Ascending aorta (tissue), 2 donors: ENCODE measurements at regions of chr6 and their contacts with region 1.

Region 1: GRCh38 chr6:157323255-157323965 is at the start of gene TMEM242:
- DNase-seq: peak; percentile 67 to 95
- H3K4me3 ChIP-seq: peak within 1 kb of the TSS; percentile 75 to 97
- H3K27ac ChIP-seq: peak within 1 kb of the TSS; percentile 96 to 97
- H3K4me1 ChIP-seq: peaks cover 7 to 21% of the 10 kb centered on the region in 2 donors
- H3K27me3 ChIP-seq: no peaks in the 10 kb centered on the region
- CTCF ChIP-seq: peak; percentile 21 to 43 (median 23)
- total RNA-seq, gene TMEM242: 2.3 TPM

Region 2: DNA sequence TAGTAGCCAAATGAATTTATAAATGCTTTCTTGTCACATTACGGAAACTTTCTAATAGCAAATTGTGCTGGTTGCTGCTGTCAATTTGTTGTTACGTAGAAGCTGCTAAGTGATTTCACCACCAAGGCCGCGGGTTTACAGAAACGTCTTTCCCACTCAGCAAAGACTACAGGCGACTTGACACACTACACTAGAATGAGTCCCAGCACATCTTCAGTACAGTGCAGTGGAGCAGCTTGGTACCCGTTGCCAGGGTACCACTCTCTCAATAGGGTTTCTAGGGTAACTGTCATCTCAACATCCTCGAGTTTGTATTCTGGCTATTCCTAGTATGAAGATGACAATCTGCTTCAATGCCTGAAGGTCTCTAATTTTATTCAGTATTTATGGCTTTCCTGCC is 34.9 kb after region 1 on chr6:
- intact Hi-C with region 1: loop called (anchors 1 kb)
- DNase-seq: no peak
- H3K4me3 ChIP-seq: no peak overlapping the region
- H3K27ac ChIP-seq: no peak overlapping the region
- H3K4me1 ChIP-seq: peaks cover 0 to 14% of the 10 kb centered on the region in 2 donors
- H3K27me3 ChIP-seq: no peaks in the 10 kb centered on the region
- CTCF ChIP-seq: no peak

Region 3: DNA sequence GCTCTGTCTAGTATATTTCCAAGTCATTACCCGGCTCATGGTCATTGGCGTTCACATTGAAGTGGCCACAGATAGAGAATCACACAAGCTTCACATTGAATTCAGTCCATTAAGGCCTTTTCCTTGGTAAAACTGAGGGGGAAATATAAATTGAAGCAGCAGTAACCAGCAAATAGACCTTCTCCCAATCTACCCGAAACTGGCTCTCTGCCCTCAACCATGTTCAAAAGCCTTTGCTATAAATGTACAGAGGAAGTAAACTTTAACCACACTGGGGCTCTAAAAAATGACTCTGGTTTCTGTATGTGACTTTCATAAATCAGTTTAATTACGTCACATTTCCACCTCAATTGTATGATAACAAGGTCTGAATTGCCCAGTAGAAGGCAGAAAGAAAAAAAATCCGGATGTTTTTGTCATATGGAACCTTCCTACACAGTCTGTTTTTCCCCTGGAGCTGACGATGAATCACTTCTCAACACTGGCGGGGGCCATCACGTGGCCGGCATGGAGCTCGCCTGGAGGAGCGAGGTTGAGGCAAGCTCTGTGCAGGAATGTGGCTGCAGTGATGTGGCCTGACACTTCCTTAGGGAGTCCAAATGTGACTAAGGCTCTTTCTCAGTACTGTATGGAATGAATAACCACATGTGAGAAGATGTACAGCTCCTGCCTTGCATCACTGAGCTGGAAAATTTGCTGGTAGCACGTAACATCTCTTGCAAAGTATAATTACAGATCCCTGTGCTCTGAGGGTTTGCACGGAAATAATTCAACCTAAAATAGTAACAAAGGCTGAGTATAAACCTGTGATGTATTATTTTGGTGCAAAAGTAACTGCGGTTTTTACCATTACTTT is 441.0 kb after region 1 on chr6:
- intact Hi-C with region 1: loop called (anchors 10 kb)
- DNase-seq: peak; percentile 90 to 97
- H3K4me3 ChIP-seq: no peak overlapping the region
- H3K27ac ChIP-seq: peak overlapping the region; percentile 82 to 84
- H3K4me1 ChIP-seq: peaks cover 12 to 47% of the 10 kb centered on the region in 2 donors
- H3K27me3 ChIP-seq: no peaks in the 10 kb centered on the region
- CTCF ChIP-seq: no peak